ENCODE measurements at regions of chr20 and their contacts with region 1.

Region 1: DNA sequence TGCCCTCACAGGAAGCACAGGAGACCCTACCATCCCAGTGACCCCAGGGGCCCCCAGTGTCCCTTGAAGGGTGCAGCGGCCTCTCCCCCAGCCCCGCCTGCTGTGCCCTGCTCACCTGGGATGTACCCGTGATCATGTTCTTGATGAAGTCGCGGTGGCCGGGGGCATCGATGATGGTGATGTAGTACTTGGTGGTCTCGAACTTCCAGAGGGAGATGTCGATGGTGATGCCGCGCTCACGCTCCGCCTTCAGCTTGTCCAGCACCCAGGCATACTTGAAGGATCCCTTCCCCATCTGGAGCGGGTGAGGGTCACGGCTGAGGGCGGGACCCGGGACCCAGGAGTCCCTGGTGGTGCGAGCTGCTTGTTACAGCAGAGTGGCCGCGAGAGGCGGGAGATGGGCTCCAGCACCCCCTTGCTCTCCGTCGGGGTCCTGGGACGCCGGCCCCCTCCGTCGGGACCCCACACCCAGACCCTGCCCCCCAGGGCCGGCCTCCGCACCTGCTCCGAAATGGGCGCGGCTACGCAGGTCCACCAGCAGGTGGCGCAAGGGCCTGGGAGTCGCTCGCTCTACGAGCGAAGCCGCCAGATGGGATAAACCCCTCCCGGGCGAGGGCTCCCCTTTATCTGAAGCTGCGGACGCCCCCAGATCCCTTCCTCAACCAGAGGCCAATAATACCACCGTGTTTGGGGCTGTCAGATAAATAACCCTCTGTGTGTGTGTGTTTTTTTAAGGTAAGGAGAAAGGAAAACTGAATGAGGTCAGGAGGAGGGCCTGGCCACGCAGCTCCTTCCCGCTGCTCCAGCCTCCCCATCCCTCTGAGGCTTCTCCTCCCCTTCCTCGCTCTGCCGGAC is 2.9 kb downstream of the EEF1A2 start:
- DNase-seq: peak; percentile 44
- H3K4me3 ChIP-seq: no peak overlapping the region
- H3K27ac ChIP-seq: no peak overlapping the region
- H3K4me1 ChIP-seq: no peaks in the 10 kb centered on the region
- H3K27me3 ChIP-seq: no peaks in the 10 kb centered on the region
- CTCF ChIP-seq: peak; percentile 92 to 96
- POLR2A ChIP-seq: no peak

Region 2: DNA sequence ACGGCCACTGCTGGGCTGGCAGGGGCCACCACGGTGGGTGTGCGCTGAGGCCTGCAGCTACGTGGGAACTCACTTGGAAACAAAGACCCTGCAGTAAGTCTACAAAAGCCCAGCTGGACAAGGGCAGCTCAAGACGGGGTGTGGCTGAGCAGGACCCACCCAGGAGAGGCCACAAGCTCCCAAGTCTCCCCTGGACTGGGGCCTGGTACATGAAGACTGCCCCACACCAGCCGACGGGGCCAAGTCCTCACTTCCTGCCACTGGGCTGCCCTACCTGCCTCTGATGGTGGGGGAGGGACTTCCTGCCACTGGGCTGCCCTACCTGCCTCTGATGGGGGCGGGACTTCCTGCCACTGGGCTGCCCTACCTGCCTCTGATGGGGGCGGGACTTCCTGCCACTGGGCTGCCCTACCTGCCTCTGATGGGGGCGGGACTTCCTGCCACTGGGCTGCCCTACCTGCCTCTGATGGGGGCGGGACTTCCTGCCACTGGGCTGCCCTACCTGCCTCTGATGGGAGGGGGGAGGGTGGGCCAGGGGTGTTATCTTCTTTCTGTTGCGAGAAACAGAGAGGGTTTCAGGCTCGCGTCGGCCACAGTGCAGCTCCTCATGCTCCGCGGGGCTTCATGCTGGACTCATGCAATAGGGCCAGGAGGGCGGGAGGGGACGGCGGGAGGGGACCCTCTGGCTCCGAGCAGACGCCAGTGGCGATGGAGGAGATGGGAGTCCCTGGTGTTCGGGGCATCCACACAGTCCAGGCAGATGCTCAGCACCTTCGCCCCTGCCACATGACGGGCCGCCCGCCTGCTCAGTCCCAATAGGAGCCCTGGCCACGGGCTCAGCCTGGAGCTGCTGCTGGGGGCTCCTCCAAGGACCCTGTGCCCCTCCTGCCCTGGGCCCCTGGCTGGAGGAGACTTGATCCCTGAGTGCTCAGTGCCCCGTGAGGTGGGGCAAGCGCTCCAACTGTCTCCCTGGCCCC is 86.2 kb before region 1 on chr20:
- CTCF ChIA-PET with region 1: no interaction called
- POLR2A ChIA-PET with region 1: no interaction called
- dilution Hi-C with region 1: no loop called
- intact Hi-C with region 1: no loop called
- DNase-seq: no peak
- H3K4me3 ChIP-seq: no peak overlapping the region
- H3K27ac ChIP-seq: no peak overlapping the region
- H3K4me1 ChIP-seq: no peaks in the 10 kb centered on the region
- H3K27me3 ChIP-seq: no peaks in the 10 kb centered on the region
- CTCF ChIP-seq: no peak
- POLR2A ChIP-seq: no peak

Region 3: DNA sequence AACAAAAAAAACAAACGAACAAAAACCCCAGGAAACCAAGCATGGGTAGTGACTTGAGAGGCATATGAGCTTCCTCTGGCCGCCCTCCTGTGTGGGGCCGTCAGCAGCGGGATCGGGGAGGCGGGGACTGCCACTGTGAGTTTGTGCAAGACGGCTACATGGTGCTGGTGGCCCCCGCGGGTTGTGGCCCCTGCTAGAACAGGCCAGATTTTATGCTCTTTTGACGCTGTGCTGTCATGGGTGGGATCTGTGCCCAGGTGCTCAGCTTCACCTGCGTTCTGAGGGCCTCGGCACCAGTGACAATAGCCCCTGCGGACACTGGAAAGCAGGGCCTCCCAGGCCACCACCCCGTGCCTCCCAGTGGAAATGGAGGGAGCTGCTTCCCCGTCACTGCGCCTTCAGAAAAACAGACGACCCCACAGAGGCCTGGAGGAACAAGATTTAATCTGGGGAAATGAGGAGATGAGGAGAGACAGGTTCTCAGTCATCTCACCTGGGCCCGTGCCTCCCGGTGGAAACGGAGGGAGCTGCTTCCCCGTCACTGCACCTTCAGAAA is 18.8 kb before region 1 on chr20:
- CTCF ChIA-PET with region 1: interaction called, 11 read pairs
- POLR2A ChIA-PET with region 1: no interaction called
- dilution Hi-C with region 1: no loop called
- intact Hi-C with region 1: no loop called
- DNase-seq: no peak
- H3K4me3 ChIP-seq: no peak overlapping the region
- H3K27ac ChIP-seq: no peak overlapping the region
- H3K4me1 ChIP-seq: no peaks in the 10 kb centered on the region
- H3K27me3 ChIP-seq: peaks cover 21 to 23% of the 10 kb centered on the region in 2 experiments
- CTCF ChIP-seq: no peak
- POLR2A ChIP-seq: no peak

Region 4: DNA sequence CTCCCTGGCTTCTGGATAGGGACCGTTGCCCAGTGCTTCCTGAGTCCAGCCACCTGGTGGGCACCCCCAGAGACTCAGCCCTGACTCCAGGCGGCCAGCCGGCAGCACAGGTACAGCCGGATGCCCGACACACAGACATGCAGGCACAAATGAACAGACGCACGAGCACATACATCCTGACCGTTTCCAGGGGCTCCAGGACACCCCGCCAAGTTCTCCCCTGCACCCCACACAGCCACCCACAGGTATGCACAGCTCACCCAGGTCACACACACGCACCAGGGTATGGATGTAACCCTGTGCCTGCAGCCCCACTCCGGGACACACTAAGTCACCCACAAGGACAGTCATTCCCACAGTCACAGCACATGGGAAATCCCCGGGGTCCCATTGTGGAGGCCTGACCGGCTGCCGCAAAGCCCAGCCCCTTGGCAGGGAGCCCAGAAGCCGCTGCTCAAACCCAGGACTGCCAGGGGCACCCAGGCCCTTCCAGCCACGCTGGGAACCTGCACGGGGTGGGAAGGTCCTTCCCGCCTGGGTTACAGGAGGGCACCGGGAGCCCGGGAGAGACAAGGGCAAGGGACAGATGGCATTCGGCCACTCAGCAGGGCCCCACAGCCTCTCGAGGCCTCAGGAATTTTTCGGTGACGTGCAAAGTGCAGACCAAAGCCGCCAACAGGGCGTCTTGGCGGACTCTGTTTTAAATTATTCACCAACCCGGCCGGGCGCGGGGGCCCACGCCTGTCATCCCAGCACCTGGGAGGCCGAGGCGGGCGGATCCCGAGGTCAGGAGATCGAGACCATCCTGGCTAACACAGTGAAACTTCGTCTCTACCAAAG is 12.9 kb before region 1 on chr20:
- CTCF ChIA-PET with region 1: interaction called, 14 read pairs
- POLR2A ChIA-PET with region 1: no interaction called
- dilution Hi-C with region 1: no loop called
- intact Hi-C with region 1: no loop called
- DNase-seq: no peak
- H3K4me3 ChIP-seq: no peak overlapping the region
- H3K27ac ChIP-seq: no peak overlapping the region
- H3K4me1 ChIP-seq: no peaks in the 10 kb centered on the region
- H3K27me3 ChIP-seq: no peaks in the 10 kb centered on the region
- CTCF ChIP-seq: no peak
- POLR2A ChIP-seq: no peak

Region 5: GRCh38 chr20:63544958-63545534 is 49.1 kb after region 1 on chr20:
- CTCF ChIA-PET with region 1: no interaction called
- POLR2A ChIA-PET with region 1: no interaction called
- dilution Hi-C with region 1: no loop called
- intact Hi-C with region 1: no loop called
- DNase-seq: no peak
- H3K4me3 ChIP-seq: no peak overlapping the region
- H3K27ac ChIP-seq: no peak overlapping the region
- H3K4me1 ChIP-seq: no peaks in the 10 kb centered on the region
- H3K27me3 ChIP-seq: no peaks in the 10 kb centered on the region
- CTCF ChIP-seq: no peak
- POLR2A ChIP-seq: no peak